ENCODE measurements at regions of chr21 and their contacts with region 1.

Region 1: DNA sequence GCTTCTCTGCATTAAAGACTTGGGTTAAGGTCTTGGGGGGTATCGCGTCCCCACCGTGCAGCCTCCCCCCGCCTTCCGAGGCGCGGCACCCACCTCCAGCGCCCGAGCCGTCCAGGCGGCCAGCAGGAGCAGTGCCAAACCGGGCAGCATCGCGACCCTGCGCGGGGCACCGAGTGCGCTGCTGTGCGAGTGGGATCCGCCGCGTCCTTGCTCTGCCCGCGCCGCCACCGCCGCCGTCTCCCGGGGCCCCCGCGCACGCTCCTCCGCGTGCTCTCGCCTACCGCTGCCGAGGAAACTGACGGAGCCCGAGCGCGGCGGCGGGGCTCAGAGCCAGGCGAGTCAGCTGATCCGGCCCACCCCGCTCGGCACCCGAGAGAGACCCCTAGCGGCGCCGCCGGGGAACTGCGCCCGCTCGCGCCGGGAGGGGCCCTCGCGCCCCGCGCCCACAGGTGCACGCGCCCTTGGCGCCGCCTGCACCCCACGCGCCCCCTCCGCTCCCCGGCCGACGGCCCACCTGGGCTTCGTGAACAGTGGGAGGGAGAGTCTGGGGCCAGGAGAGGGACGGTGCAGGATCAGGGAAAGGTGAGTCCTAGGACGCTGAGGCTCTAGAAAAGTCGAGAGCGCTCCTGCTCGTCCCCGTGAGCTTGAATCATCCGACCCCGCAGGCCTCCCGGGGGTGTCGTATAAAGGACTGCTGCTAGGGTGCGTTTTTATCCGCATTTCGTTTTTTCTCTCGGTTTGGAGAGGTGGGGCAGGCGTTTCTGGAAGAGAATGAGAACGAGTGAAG is at the start of gene APP:
- DNase-seq: peak; percentile 77 to 91 (median 88)
- H3K4me3 ChIP-seq: peak within 1 kb of the TSS; percentile 64 to 72
- H3K4me3 Mint-ChIP-seq: peak within 1 kb of the TSS; percentile 88 to 99 (median 96)
- H3K27ac ChIP-seq: peak within 1 kb of the TSS; percentile 32
- H3K27ac Mint-ChIP-seq: peak within 1 kb of the TSS in 6 of 7 donors; percentile 74 to 96 (median 85)
- H3K4me1 ChIP-seq: peaks cover 10% of the 10 kb centered on the region
- H3K4me1 Mint-ChIP-seq: peaks cover 11 to 27% (median 15%) of the 10 kb centered on the region in 4 donors
- H3K27me3 ChIP-seq: no peaks in the 10 kb centered on the region
- H3K27me3 Mint-ChIP-seq: peaks cover 1 to 6% of the 10 kb centered on the region in 2 donors
- total RNA-seq, gene APP: 53.3 to 57.9 TPM

Region 2: GRCh38 chr21:25734904-25735645 is 435.6 kb before region 1 on chr21 and contains the starts of genes ATP5PF and GABPA:
- CTCF ChIA-PET with region 1: no interaction called
- POLR2A ChIA-PET with region 1: interaction called, 8 read pairs
- intact Hi-C with region 1: loop called (anchors 2 kb)
- DNase-seq: peak; percentile 96 to 98 (median 98)
- H3K4me3 ChIP-seq: peak within 1 kb of the TSS; percentile 77 to 93
- H3K4me3 Mint-ChIP-seq: peak within 1 kb of the TSS; percentile 99 to 100 (median 100)
- H3K27ac ChIP-seq: peak within 1 kb of the TSS; percentile 91
- H3K27ac Mint-ChIP-seq: peak within 1 kb of the TSS; percentile 99 to 100 (median 100)
- H3K4me1 ChIP-seq: peaks cover 52% of the 10 kb centered on the region
- H3K4me1 Mint-ChIP-seq: peaks cover 38 to 71% (median 53%) of the 10 kb centered on the region in 4 donors
- H3K27me3 ChIP-seq: no peaks in the 10 kb centered on the region
- H3K27me3 Mint-ChIP-seq: peaks cover 3 to 4% of the 10 kb centered on the region in 2 donors
- total RNA-seq, gene ATP5PF: 56.6 to 64.1 TPM
- total RNA-seq, gene GABPA: 28.4 to 29.4 TPM

Region 3: GRCh38 chr21:25881525-25882376 is 288.9 kb before region 1 on chr21:
- CTCF ChIA-PET with region 1: interaction called, 7 read pairs
- POLR2A ChIA-PET with region 1: no interaction called
- intact Hi-C with region 1: loop called (anchors 1 kb)
- DNase-seq: peak; percentile 42 to 56 (median 48)
- H3K4me3 ChIP-seq: no peak overlapping the region
- H3K4me3 Mint-ChIP-seq: no peak overlapping the region
- H3K27ac ChIP-seq: no peak overlapping the region
- H3K27ac Mint-ChIP-seq: no peak overlapping the region
- H3K4me1 ChIP-seq: no peaks in the 10 kb centered on the region
- H3K4me1 Mint-ChIP-seq: no peaks in the 10 kb centered on the region
- H3K27me3 ChIP-seq: no peaks in the 10 kb centered on the region
- H3K27me3 Mint-ChIP-seq: no peaks in the 10 kb centered on the region

Region 4: GRCh38 chr21:25895565-25896205 is 275.0 kb before region 1 on chr21:
- CTCF ChIA-PET with region 1: interaction called, 44 read pairs
- POLR2A ChIA-PET with region 1: interaction called, 6 read pairs
- intact Hi-C with region 1: loop called (anchors 1 kb)
- DNase-seq: peak in 4 of 5 donors; percentile 20 to 41 (median 25)
- H3K4me3 ChIP-seq: no peak overlapping the region
- H3K4me3 Mint-ChIP-seq: peak overlapping the region in 1 of 8 donors; percentile 15
- H3K27ac ChIP-seq: no peak overlapping the region
- H3K27ac Mint-ChIP-seq: no peak overlapping the region
- H3K4me1 ChIP-seq: no peaks in the 10 kb centered on the region
- H3K4me1 Mint-ChIP-seq: peaks cover 2 to 9% (median 5%) of the 10 kb centered on the region in 4 donors
- H3K27me3 ChIP-seq: no peaks in the 10 kb centered on the region
- H3K27me3 Mint-ChIP-seq: no peaks in the 10 kb centered on the region

Region 5: DNA sequence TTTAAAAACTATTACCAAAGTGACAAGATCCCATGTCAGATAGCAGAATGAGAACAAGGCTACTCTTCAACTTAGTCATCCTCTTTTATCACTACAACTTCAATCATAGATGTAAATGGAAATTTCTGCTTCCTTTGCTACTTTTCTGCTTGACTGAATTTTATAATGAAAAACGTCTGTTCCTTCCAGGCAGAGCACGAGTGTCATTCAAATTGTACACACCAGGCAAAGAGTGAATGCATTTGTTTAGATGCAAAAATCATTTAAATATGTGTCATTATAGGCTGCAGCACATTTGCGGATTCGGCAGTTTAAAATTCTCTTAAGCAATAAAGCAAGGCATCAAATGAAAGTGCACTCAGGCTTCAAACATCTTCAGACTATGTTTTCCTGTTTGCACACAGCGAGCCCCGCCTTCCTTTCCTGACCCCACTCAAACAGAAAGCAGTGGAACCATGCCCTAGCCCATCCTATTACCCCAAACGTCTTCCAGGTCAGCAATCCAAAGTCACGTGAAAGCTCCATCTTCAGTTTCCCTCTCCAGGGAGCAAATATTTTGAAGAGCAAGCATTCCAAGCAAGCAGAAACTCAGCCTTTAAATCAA is 99.7 kb before region 1 on chr21:
- CTCF ChIA-PET with region 1: interaction called, 6 read pairs
- POLR2A ChIA-PET with region 1: interaction called, 9 read pairs
- intact Hi-C with region 1: loop called (anchors 1 kb)
- DNase-seq: peak; percentile 28 to 56 (median 36)
- H3K4me3 ChIP-seq: peak overlapping the region; percentile 27 to 42
- H3K4me3 Mint-ChIP-seq: peak overlapping the region; percentile 76 to 90 (median 85)
- H3K27ac ChIP-seq: peak overlapping the region; percentile 44
- H3K27ac Mint-ChIP-seq: peak overlapping the region; percentile 70 to 93 (median 87)
- H3K4me1 ChIP-seq: peaks cover 41% of the 10 kb centered on the region
- H3K4me1 Mint-ChIP-seq: peaks cover 32 to 47% (median 40%) of the 10 kb centered on the region in 4 donors
- H3K27me3 ChIP-seq: no peaks in the 10 kb centered on the region
- H3K27me3 Mint-ChIP-seq: no peaks in the 10 kb centered on the region

Region 6: GRCh38 chr21:26795866-26796329 is 625.2 kb after region 1 on chr21:
- CTCF ChIA-PET with region 1: no interaction called
- POLR2A ChIA-PET with region 1: no interaction called
- intact Hi-C with region 1: no loop called
- DNase-seq: no peak
- H3K4me3 ChIP-seq: no peak overlapping the region
- H3K4me3 Mint-ChIP-seq: no peak overlapping the region
- H3K27ac ChIP-seq: no peak overlapping the region
- H3K27ac Mint-ChIP-seq: no peak overlapping the region
- H3K4me1 ChIP-seq: no peaks in the 10 kb centered on the region
- H3K4me1 Mint-ChIP-seq: no peaks in the 10 kb centered on the region
- H3K27me3 ChIP-seq: no peaks in the 10 kb centered on the region
- H3K27me3 Mint-ChIP-seq: peaks cover 0 to 6% of the 10 kb centered on the region in 2 donors

Measured in CD4-positive, alpha-beta memory T cell (primary cell).